WTC11 (cell line): ENCODE measurements at regions of chr10 and their contacts with region 1.

Region 1: DNA sequence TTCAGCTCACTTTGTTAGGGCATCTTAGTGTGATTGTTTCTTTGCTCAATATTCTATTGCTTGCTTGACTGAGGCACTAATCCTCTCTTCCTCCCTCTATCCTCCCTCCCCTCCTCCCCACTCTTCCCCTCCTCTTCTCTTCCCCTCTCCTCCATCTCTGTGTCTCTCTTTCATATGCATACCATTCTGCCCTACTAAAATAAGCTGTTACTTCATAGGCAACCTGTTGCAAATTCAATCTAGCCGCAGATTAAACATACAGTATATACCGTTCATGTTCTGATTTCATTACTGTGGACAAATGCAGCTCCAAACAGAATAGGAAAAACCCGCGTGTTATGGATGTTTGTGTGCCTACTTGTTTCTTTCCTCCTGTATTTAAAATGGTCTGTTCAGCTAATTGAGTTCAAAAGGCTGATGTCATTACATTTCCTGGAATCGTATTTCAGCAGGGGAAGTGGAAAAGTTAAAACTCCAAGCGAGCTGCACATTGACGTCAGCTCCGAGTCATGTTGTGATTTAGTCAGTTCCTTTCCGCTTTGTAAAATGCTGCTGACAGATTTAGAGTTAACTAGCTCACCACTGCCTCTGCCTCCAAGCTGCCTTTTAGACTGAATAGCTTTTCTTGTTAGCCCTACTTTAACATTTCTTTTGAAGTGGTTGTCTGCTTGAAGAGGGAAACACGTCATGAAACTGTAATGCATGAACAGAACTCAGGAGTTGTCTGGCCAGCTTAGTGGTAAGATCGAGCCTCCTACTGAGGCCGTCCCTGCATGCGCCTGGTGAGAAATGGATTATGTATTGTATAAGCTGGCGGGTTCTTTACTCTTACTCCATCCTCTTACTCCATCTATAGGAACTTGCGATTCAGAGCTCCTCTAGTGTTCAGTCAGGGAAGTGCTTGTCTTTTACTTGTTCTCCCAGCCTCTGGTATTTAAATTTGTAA is 69.0 kb downstream of the CREM start:
- DNase-seq: no peak
- ATAC-seq: peak; percentile 93
- H3K4me3 Mint-ChIP-seq: peak overlapping the region; percentile 72
- H3K27ac Mint-ChIP-seq: peak overlapping the region; percentile 89
- H3K4me1 Mint-ChIP-seq: peaks cover 27% of the 10 kb centered on the region
- H3K27me3 Mint-ChIP-seq: no peaks in the 10 kb centered on the region
- CTCF ChIP-seq: peak; percentile 72

Region 2: DNA sequence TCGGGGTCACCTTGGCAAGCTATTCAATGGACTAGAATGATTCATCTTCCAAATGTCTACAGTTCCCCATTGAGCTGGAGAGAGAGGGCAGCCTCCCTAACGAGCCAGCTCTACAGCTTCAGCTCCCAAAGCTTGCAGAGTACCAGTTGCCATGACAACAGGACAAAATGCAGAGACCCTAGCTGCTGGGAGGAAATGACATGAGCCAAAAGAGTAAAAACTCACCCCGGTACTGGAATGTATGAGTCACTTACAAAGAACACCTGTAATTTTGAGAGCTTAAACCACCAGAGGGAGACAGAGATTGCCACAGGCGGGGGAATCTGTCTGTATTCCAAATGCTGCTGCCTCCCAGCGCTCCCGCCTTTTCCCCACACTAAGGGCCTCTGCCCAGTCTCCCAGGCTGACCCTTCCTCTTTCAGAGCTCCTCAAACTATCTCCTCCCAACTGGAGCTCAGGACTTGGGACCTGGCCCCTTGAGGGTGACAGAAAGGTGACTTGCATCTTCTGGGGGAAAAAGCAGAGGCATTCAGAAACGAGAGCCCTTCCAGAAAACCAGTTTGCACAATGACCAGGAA is 201.0 kb before region 1 on chr10:
- CTCF ChIA-PET with region 1: interaction called, 36 read pairs
- POLR2A ChIA-PET with region 1: no interaction called
- DNase-seq: peak; percentile 74
- ATAC-seq: peak; percentile 87
- H3K4me3 Mint-ChIP-seq: no peak overlapping the region
- H3K27ac Mint-ChIP-seq: peak overlapping the region; percentile 16; the same call in 1 of the 2 replicates
- H3K4me1 Mint-ChIP-seq: peaks cover 23% of the 10 kb centered on the region
- H3K27me3 Mint-ChIP-seq: peaks cover 2% of the 10 kb centered on the region
- CTCF ChIP-seq: peak; percentile 54

Region 3: DNA sequence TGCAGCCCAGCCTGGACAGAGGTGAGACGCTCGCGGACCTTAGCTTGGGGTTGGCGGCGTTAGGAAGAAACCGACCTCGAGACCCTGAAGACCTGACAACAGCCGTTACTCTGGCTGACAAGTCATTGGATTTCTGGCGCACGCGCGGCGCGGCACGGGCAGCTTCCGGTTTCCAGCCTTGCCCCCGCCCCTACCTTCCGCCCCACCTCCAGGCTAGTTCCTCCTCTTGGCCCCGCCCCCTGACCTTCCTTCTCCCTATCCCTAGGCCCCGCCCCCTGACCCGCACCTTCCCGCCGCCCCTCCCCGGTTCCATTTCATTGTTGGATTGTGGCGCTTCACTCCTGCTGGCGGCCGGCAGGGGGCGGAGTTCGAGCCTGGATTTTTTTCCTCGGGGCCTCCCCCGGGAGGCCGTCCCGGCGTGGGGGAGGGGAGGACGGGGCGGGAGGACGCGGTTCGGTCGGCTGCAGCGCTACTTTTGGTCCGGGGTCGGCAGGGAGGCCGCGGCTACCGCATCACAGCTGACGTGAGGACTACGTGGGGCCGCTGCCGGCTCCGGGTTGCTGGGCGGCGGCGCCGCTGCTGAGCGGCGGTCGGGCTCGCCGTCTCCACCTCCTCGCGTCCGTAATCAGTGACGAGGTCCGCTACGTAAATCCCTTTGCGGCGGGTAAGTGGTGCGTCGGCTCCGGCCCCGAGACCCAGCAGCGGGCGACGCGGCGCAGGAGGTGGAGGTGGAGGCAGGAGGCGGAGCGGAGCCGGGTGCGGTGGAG is 68.9 kb before region 1 on chr10 and contains the start of gene CREM:
- CTCF ChIA-PET with region 1: interaction called, 48 read pairs
- POLR2A ChIA-PET with region 1: interaction called, 10 read pairs
- DNase-seq: peak; percentile 99
- ATAC-seq: peak; percentile 94
- H3K4me3 Mint-ChIP-seq: peak within 1 kb of the TSS; percentile 87
- H3K27ac Mint-ChIP-seq: peak within 1 kb of the TSS; percentile 97
- H3K4me1 Mint-ChIP-seq: peaks cover 13% of the 10 kb centered on the region
- H3K27me3 Mint-ChIP-seq: no peaks in the 10 kb centered on the region; the same call in 1 of the 2 replicates
- CTCF ChIP-seq: peak; percentile 94
- total RNA-seq, gene CREM: 17.3 to 23.6 TPM (median 18.3 TPM) in 3 replicates

Region 4: GRCh38 chr10:35172574-35172973 is 23.1 kb before region 1 on chr10:
- CTCF ChIA-PET with region 1: interaction called, 11 read pairs
- POLR2A ChIA-PET with region 1: no interaction called
- DNase-seq: no peak
- ATAC-seq: no peak
- H3K4me3 Mint-ChIP-seq: no peak overlapping the region
- H3K27ac Mint-ChIP-seq: no peak overlapping the region
- H3K4me1 Mint-ChIP-seq: no peaks in the 10 kb centered on the region
- H3K27me3 Mint-ChIP-seq: no peaks in the 10 kb centered on the region
- CTCF ChIP-seq: no peak

Region 5: DNA sequence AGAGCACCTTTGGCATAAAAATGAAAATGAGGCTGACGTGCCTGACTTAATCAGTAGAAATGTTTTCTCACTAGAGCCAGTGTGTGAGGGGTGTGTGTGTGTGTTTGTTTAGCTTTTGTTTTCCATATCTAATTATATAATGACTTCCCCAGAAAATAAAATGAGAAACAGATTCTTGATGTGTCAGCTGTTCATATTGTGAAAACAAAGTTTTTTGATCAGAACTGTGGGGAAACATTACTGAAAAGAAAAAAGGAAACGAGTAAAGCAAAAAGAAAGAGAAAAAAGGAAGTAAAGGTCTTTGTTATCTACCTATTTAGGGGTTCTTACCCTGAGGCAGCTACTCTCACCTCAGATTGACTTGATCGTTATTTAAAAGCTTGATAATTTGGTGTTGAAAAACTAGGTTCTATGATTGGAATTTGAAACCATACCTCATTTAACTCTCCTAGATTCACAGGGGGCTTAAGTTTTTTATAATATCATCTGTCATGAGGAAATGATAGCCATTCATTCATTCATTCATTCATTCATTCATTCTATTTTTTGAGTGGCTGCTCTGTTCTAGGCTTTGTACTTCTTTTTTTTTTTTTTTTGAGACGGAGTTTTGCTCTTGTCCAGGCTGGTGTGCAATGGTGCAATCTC is 11.0 kb before region 1 on chr10:
- CTCF ChIA-PET with region 1: interaction called, 13 read pairs
- POLR2A ChIA-PET with region 1: no interaction called
- DNase-seq: no peak
- ATAC-seq: no peak
- H3K4me3 Mint-ChIP-seq: no peak overlapping the region
- H3K27ac Mint-ChIP-seq: no peak overlapping the region
- H3K4me1 Mint-ChIP-seq: no peaks in the 10 kb centered on the region
- H3K27me3 Mint-ChIP-seq: no peaks in the 10 kb centered on the region
- CTCF ChIP-seq: no peak

Region 6: DNA sequence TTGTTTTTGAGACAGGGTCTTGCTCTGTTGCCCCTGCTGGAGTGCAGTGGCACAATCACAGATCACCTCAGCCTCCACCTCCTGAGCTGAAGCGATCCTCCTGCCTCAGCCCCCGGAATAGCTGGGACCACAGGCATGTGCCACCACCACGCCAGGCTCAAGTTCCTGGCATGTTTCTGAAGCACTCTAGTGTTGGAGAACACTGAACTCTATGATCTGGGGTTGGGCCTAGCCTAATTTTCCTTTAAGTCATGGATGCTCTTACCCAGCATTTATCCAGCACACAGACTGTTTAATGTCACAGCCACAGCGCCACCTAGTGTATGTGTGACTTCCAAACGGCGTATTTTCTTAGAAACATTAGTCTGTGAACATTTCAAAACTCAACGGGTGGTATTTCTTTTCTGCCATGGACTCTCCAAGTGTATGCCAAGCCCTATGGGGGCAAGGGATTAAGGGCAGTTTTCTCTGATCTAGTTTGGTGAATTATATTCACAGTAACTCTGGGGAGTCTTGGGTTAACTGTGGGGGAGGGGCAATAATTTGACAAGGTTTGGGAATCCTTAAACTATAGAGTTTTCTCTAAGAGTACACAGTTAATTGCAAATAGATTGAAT is 22.8 kb after region 1 on chr10:
- CTCF ChIA-PET with region 1: interaction called, 33 read pairs
- POLR2A ChIA-PET with region 1: no interaction called
- DNase-seq: peak; percentile 81
- ATAC-seq: peak; percentile 66
- H3K4me3 Mint-ChIP-seq: no peak overlapping the region
- H3K27ac Mint-ChIP-seq: no peak overlapping the region
- H3K4me1 Mint-ChIP-seq: no peaks in the 10 kb centered on the region
- H3K27me3 Mint-ChIP-seq: no peaks in the 10 kb centered on the region
- CTCF ChIP-seq: peak; percentile 74